ENCODE measurements at regions of chr18 and their contacts with region 1.

Region 1: DNA sequence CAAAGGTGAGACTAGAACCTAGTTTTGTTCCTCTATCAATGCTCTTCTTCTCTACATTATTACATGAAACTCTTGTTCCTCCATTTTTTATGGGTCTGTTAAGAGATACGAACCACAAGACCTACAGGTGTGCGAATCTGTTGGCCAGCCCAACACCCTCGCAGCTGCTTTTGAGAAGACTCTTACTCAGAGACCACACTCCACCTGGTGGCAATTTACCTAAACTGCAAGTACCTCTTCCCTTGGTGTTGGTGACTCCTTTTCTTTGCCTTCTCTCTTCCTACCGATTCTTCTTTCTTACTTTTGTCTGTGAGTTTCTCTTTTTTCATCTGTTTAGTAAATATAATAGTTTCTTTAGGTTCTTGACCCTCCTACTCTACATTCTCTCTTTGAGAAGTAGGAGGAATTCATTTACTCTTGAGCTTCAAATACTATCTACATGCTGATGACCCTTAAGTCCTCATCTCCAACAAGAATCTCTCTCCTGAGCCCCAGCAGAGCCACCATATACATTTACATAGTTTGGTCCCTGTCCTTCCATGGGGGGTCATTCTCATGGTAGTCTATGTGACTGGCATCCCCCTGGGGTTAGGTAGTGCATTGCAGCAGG is 81.8 kb upstream of the GAREM1 start:
- DNase-seq: no peak
- H3K4me3 ChIP-seq: no peak overlapping the region
- H3K27ac ChIP-seq: no peak overlapping the region
- H3K4me1 ChIP-seq: no peaks in the 10 kb centered on the region
- H3K27me3 ChIP-seq: no peaks in the 10 kb centered on the region
- CTCF ChIP-seq: peak; percentile 65 to 80 (median 77)
- EP300 ChIP-seq: no peak
- POLR2A ChIP-seq: no peak

Region 2: DNA sequence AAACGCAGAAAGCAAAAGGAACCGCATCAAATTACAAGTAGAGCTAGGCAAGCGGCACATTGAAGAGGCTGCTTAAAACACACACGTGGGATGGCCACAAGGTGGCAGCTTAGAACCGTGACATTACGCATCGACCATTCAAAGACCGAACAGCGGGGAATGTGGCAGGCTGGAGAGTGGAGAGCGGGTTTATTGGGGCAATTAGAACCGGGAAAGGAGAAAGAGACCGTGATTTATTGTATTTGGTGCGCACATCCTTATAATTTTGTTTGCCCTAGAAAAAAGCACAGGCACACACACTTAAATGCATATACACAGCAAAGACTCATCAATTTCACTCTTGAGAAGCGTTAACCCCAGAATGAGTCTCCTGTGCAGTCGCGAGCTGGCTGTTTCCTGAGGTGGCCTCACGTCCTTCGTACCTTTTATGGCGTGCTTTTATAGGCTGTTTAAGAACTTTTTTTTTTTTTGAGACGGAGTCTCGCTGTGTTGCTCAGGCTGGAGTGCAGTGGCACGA is 394.4 kb before region 1 on chr18:
- intact Hi-C with region 1: loop called (anchors 2 kb)
- DNase-seq: peak; percentile 95
- H3K4me3 ChIP-seq: peak overlapping the region; percentile 27 to 50 (median 40)
- H3K27ac ChIP-seq: no peak overlapping the region
- H3K4me1 ChIP-seq: peaks cover 5 to 11% (median 8%) of the 10 kb centered on the region in 4 donors
- H3K27me3 ChIP-seq: no peaks in the 10 kb centered on the region
- CTCF ChIP-seq: peak; percentile 84 to 86 (median 85)
- EP300 ChIP-seq: no peak
- POLR2A ChIP-seq: no peak

Region 3: DNA sequence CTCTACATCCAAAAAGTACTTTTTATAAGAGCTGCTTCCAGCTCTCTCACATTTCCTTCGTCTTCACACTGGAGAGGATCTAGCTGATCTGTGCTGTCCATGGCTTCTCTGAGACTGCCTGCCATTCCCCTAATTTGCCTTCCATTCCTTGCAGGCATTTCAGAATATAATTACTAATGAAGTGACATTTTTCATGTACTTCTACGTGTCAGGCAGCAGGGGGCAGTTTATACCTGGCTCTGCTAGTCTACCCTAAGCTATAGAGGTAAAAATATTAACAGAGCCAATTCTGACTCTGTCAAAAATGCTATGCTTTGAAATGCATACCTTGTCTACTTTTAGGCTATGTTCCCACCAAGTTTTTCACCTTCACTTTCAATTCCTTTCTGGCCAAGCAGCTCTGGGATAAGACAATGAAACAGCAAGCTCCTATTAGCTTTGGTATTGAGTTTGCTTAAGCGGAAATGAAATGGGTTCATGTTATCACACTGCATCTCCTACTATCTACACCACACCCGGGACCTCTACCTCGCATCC is 280.8 kb before region 1 on chr18:
- intact Hi-C with region 1: loop called (anchors 2 kb)
- DNase-seq: no peak
- H3K4me3 ChIP-seq: no peak overlapping the region
- H3K27ac ChIP-seq: no peak overlapping the region
- H3K4me1 ChIP-seq: peaks cover 0 to 8% (median 3%) of the 10 kb centered on the region in 4 donors
- H3K27me3 ChIP-seq: no peaks in the 10 kb centered on the region
- CTCF ChIP-seq: peak; percentile 69 to 70 (median 70)
- EP300 ChIP-seq: no peak
- POLR2A ChIP-seq: no peak

Region 4: DNA sequence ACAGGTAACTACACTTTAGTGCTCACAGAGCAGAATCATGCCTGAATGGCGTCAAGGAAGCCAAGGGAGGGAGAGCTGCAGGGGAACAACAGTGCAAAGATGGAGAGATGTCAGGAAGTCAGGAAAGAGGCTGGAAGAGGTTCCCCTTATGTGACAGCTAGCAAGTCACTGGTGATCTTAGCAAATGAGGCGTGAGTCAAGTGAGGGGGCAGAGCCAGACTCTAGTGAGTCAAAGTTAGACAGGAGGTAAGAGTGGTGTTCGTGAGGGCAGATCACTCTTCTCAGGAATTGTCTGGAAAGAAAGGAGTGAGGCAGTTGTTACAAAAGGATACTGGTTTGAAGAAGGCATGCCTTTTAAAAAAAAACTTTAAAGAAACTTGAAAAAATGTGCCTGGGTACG is 275.6 kb before region 1 on chr18:
- intact Hi-C with region 1: loop called (anchors 2 kb)
- DNase-seq: no peak
- H3K4me3 ChIP-seq: no peak overlapping the region
- H3K27ac ChIP-seq: no peak overlapping the region
- H3K4me1 ChIP-seq: peaks cover 0 to 26% (median 16%) of the 10 kb centered on the region in 4 donors
- H3K27me3 ChIP-seq: no peaks in the 10 kb centered on the region
- CTCF ChIP-seq: no peak
- EP300 ChIP-seq: no peak
- POLR2A ChIP-seq: no peak

Region 5: GRCh38 chr18:32511147-32511546 is 41.4 kb before region 1 on chr18:
- intact Hi-C with region 1: no loop called
- DNase-seq: no peak
- H3K4me3 ChIP-seq: no peak overlapping the region
- H3K27ac ChIP-seq: no peak overlapping the region
- H3K4me1 ChIP-seq: no peaks in the 10 kb centered on the region
- H3K27me3 ChIP-seq: no peaks in the 10 kb centered on the region
- CTCF ChIP-seq: no peak
- EP300 ChIP-seq: no peak
- POLR2A ChIP-seq: no peak

Region 6: DNA sequence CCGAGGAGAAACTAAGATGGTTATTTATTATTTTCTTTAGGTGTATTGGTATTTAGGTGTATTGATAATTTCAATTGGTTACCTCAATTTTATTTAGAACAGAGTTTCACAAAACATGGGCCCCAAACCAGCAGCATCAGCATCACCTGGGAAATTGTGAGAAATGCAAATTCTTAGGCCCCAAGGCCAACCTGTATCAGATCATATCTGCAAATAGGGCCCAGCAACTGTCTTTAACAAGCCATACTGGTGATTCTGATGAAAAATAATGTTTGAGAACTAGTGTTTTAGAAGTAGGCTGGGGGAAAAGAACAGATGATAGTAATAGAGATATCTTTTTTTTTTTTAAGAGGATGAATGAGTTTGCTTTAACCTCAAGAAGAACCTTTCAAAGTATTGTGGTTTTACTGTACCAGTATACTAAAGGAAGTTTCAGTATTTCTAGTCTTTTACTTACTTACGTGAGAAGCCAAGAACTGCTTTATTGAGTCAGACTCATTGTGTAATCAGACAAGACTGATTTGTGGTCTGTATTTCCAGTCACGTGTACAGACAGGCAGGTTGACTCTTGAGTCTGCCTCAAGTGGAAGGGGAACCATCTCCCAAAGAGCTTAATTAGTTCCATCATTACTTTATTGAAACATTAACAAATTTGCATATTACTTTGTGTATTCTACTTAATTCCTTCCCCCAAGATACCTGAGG is 21.4 kb before region 1 on chr18:
- intact Hi-C with region 1: no loop called
- DNase-seq: no peak
- H3K4me3 ChIP-seq: no peak overlapping the region
- H3K27ac ChIP-seq: no peak overlapping the region
- H3K4me1 ChIP-seq: no peaks in the 10 kb centered on the region
- H3K27me3 ChIP-seq: no peaks in the 10 kb centered on the region
- CTCF ChIP-seq: no peak
- EP300 ChIP-seq: no peak
- POLR2A ChIP-seq: no peak

Measured in esophagus muscularis mucosa (tissue), 4 donors.